ENCODE measurements at regions of chr10 and their contacts with region 1.

Region 1: DNA sequence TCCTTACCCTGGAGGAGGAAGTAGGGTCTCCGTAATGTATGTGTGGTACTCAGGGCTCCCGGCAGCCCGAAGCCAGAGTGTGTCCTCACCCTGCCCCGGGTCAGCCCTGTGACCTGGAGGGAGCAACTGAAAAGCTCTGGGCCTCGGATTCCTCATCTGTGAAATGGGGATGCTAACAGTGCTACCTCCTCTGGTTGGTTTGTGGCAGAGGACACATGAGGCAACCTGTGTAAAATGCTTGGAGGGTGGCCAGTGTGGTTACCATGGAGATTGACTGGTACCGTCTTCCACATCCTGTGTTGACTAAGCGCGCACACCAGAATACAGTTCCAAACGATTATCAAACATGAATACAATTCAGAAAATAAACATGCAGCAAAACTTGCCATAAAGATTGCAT is 163.8 kb upstream of the KLF6 start:
- DNase-seq: peak; percentile 88
- H3K4me3 Mint-ChIP-seq: peak overlapping the region; percentile 66
- H3K27ac Mint-ChIP-seq: peak overlapping the region; percentile 83
- H3K4me1 Mint-ChIP-seq: peaks cover 58% of the 10 kb centered on the region
- H3K27me3 Mint-ChIP-seq: no peaks in the 10 kb centered on the region

Region 2: DNA sequence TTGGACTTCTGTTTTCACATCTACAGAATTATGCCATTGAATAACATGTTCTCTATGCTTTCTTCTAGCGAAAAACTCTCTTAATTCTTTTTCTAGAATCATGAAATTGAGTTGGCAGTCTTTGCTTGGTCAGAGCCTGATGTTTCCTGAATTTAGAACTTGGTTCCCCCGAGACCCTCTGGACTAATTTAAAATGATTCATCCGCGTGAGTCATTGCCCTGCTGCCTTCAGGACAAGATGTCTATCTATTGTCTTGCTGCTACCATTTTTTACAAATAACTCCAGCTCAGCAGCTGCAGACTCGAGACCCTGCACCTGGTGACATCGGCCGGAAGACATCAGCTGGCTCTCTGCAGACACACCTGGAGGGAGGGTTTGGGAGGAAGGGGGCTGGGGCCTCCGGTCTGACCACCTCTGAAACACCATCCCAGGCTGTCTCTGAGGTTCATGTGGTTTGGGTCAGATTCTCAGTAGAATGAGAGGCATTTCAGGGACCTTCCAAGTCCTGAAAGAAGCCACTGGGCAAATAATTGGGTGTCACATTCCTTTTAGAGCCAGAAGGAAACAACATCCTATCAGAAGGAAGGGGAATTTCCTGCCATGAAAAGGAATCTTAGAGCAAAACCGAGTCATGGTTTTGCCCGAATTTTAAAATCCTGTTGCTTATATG is 142.9 kb before region 1 on chr10:
- CTCF ChIA-PET with region 1: no interaction called
- POLR2A ChIA-PET with region 1: no interaction called
- intact Hi-C with region 1: loop called (anchors 2 kb)
- DNase-seq: peak; percentile 72
- H3K4me3 Mint-ChIP-seq: peak overlapping the region; percentile 68
- H3K27ac Mint-ChIP-seq: no peak overlapping the region
- H3K4me1 Mint-ChIP-seq: peaks cover 62% of the 10 kb centered on the region
- H3K27me3 Mint-ChIP-seq: no peaks in the 10 kb centered on the region

Region 3: GRCh38 chr10:3961082-3961481 is 12.2 kb after region 1 on chr10:
- CTCF ChIA-PET with region 1: no interaction called
- POLR2A ChIA-PET with region 1: interaction called, 3 read pairs
- intact Hi-C with region 1: loop called (anchors 1 kb)
- DNase-seq: peak; percentile 70
- H3K4me3 Mint-ChIP-seq: no peak overlapping the region
- H3K27ac Mint-ChIP-seq: peak overlapping the region; percentile 58
- H3K4me1 Mint-ChIP-seq: peaks cover 37% of the 10 kb centered on the region
- H3K27me3 Mint-ChIP-seq: no peaks in the 10 kb centered on the region

Region 4: GRCh38 chr10:3972460-3973301 is 23.8 kb after region 1 on chr10:
- CTCF ChIA-PET with region 1: interaction called, 4 read pairs
- POLR2A ChIA-PET with region 1: no interaction called
- intact Hi-C with region 1: loop called (anchors 2 kb)
- DNase-seq: peak; percentile 68
- H3K4me3 Mint-ChIP-seq: peak overlapping the region; percentile 66
- H3K27ac Mint-ChIP-seq: peak overlapping the region; percentile 96
- H3K4me1 Mint-ChIP-seq: peaks cover 49% of the 10 kb centered on the region
- H3K27me3 Mint-ChIP-seq: no peaks in the 10 kb centered on the region

Region 5: DNA sequence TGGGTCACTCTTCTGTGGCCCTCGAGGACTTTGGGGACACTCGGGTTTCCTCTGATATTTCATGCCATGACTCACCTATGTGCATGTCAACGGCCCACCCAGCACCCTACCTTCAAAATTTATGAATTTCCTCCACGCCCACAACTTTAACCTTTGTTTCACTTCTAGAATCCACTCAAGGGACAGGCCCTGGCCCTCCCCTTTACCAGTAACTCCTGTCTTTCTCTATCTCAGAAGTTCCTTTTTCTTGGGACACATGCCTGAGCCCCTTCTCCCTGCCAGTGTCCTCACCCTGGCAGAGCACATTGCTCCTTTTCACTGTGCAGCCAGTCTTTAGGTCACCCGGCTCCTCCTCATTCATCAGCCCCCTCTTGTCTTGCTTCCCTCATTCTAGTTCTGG is 118.7 kb after region 1 on chr10:
- CTCF ChIA-PET with region 1: no interaction called
- POLR2A ChIA-PET with region 1: no interaction called
- intact Hi-C with region 1: loop called (anchors 5 kb)
- DNase-seq: peak; percentile 57
- H3K4me3 Mint-ChIP-seq: no peak overlapping the region
- H3K27ac Mint-ChIP-seq: no peak overlapping the region
- H3K4me1 Mint-ChIP-seq: peaks cover 3% of the 10 kb centered on the region
- H3K27me3 Mint-ChIP-seq: no peaks in the 10 kb centered on the region

Region 6: GRCh38 chr10:4086131-4086898 is 137.5 kb after region 1 on chr10:
- CTCF ChIA-PET with region 1: no interaction called
- POLR2A ChIA-PET with region 1: no interaction called
- intact Hi-C with region 1: no loop called
- DNase-seq: no peak
- H3K4me3 Mint-ChIP-seq: no peak overlapping the region
- H3K27ac Mint-ChIP-seq: no peak overlapping the region
- H3K4me1 Mint-ChIP-seq: peaks cover 15% of the 10 kb centered on the region
- H3K27me3 Mint-ChIP-seq: no peaks in the 10 kb centered on the region

Region 7: GRCh38 chr10:4241724-4242345 is 293.0 kb after region 1 on chr10:
- CTCF ChIA-PET with region 1: no interaction called
- POLR2A ChIA-PET with region 1: no interaction called
- intact Hi-C with region 1: loop called (anchors 10 kb)
- DNase-seq: no peak
- H3K4me3 Mint-ChIP-seq: no peak overlapping the region
- H3K27ac Mint-ChIP-seq: no peak overlapping the region
- H3K4me1 Mint-ChIP-seq: peaks cover 32% of the 10 kb centered on the region
- H3K27me3 Mint-ChIP-seq: no peaks in the 10 kb centered on the region